ENCODE measurements at regions of chr4 and their contacts with region 1.

Region 1: GRCh38 chr4:1351854-1352633 is 5.0 kb downstream of the UVSSA start:
- DNase-seq: peak; percentile 98
- H3K4me3 ChIP-seq: no peak overlapping the region
- H3K27ac ChIP-seq: peak overlapping the region in 4 of 8 donors; percentile 44 to 61 (median 49)
- H3K4me1 ChIP-seq: peaks cover 10 to 63% (median 30%) of the 10 kb centered on the region in 6 donors
- H3K27me3 ChIP-seq: no peaks in the 10 kb centered on the region
- CTCF ChIP-seq: peak; percentile 84 to 98 (median 95)
- POLR2A ChIP-seq: no peak

Region 2: GRCh38 chr4:1130316-1131186 is 221.5 kb before region 1 on chr4:
- intact Hi-C with region 1: loop called (anchors 5 kb)
- DNase-seq: peak; percentile 91
- H3K4me3 ChIP-seq: no peak overlapping the region
- H3K27ac ChIP-seq: peak overlapping the region in 1 of 8 donors; percentile 18
- H3K4me1 ChIP-seq: peaks cover 0 to 32% (median 8%) of the 10 kb centered on the region in 6 donors
- H3K27me3 ChIP-seq: peaks cover 0 to 9% (median 0%) of the 10 kb centered on the region in 7 donors
- CTCF ChIP-seq: peak; percentile 99 to 100 (median 99)
- POLR2A ChIP-seq: no peak

Region 3: DNA sequence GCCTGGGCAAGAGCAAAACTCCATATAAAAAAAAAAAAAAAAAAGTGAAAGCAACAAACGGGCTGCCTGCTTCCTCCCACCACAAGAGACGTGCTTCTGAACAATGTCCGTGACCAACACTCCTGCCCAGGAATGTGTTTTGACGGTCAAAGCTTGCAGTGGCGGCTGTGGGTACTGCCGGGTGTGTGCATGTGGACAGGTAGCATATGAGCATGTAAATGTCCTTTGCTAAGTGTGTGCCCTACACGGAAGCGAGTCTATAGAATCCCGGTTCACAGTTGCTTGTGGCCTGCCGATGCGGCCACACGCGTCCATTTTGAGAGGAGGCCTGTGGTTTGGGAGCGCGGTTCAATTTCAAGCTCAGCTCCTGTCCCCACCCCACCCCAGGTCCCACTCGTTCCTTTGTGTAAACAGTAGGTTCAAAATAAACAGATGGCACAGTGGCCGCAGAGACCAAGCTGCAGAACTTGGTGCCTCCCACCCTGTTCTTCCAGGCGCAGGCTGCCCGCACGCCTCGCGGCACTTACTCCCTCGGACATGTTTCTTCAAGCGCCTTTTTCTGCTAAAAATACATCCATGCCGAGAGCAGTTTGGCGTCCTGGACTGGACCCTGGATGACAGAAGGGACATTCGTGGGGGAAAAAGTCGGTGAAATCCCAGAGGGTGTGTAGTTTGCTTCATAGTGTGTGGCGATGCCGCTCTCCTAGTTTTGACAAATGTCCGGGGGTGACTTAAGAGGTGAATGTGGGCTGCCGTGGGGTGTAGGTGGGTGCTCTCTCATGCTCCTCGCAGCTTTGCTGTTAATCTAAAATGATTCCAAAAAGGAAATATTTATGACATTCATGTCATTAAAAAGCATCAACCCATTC is 65.7 kb after region 1 on chr4:
- intact Hi-C with region 1: no loop called
- DNase-seq: peak; percentile 45
- H3K4me3 ChIP-seq: no peak overlapping the region
- H3K27ac ChIP-seq: no peak overlapping the region
- H3K4me1 ChIP-seq: peaks cover 0 to 5% (median 0%) of the 10 kb centered on the region in 6 donors
- H3K27me3 ChIP-seq: peaks cover 2 to 93% (median 37%) of the 10 kb centered on the region in 7 donors
- CTCF ChIP-seq: no peak
- POLR2A ChIP-seq: no peak

Region 4: GRCh38 chr4:1472148-1472797 is 120.2 kb after region 1 on chr4:
- intact Hi-C with region 1: no loop called
- DNase-seq: peak; percentile 70
- H3K4me3 ChIP-seq: no peak overlapping the region
- H3K27ac ChIP-seq: no peak overlapping the region
- H3K4me1 ChIP-seq: peaks cover 0 to 14% (median 6%) of the 10 kb centered on the region in 6 donors
- H3K27me3 ChIP-seq: peaks cover 4 to 62% (median 35%) of the 10 kb centered on the region in 7 donors
- CTCF ChIP-seq: no peak
- POLR2A ChIP-seq: no peak

Region 5: GRCh38 chr4:1628892-1629698 is 277.1 kb after region 1 on chr4:
- intact Hi-C with region 1: loop called (anchors 5 kb)
- DNase-seq: peak; percentile 91
- H3K4me3 ChIP-seq: no peak overlapping the region
- H3K27ac ChIP-seq: no peak overlapping the region
- H3K4me1 ChIP-seq: peaks cover 0 to 8% (median 5%) of the 10 kb centered on the region in 6 donors
- H3K27me3 ChIP-seq: peaks cover 0 to 18% (median 0%) of the 10 kb centered on the region in 7 donors
- CTCF ChIP-seq: peak; percentile 85 to 100 (median 96)
- POLR2A ChIP-seq: no peak

Region 6: GRCh38 chr4:2220016-2220630 is 868.1 kb after region 1 on chr4:
- intact Hi-C with region 1: no loop called
- DNase-seq: peak; percentile 89
- H3K4me3 ChIP-seq: no peak overlapping the region
- H3K27ac ChIP-seq: no peak overlapping the region
- H3K4me1 ChIP-seq: peaks cover 0 to 9% (median 3%) of the 10 kb centered on the region in 6 donors
- H3K27me3 ChIP-seq: no peaks in the 10 kb centered on the region
- CTCF ChIP-seq: peak; percentile 65 to 89 (median 82)
- POLR2A ChIP-seq: no peak

Measured in spleen (tissue), 13 donors.